Activated CD4-positive, alpha-beta memory T cell treated with anti-CD3 and anti-CD28 coated beads, Interleukin-2, amount 10 ng/mL, durations not matched to agents 7 days and 5 days (primary cell): ENCODE measurements at regions of chr19 and their contacts with region 1.

Region 1: GRCh38 chr19:13155472-13156359 is 5.5 kb downstream of the IER2 start:
- DNase-seq: peak; percentile 84
- H3K4me3 Mint-ChIP-seq: peak overlapping the region; percentile 95
- H3K27ac Mint-ChIP-seq: peak overlapping the region; percentile 99
- H3K4me1 Mint-ChIP-seq: peaks cover 47% of the 10 kb centered on the region
- H3K27me3 Mint-ChIP-seq: no peaks in the 10 kb centered on the region

Region 2: GRCh38 chr19:13099073-13099999 is 56.4 kb before region 1 on chr19:
- CTCF ChIA-PET with region 1: interaction called, 12 read pairs
- POLR2A ChIA-PET with region 1: interaction called, 21 read pairs
- DNase-seq: peak; percentile 86
- H3K4me3 Mint-ChIP-seq: peak overlapping the region; percentile 66
- H3K27ac Mint-ChIP-seq: peak overlapping the region; percentile 91
- H3K4me1 Mint-ChIP-seq: peaks cover 63% of the 10 kb centered on the region
- H3K27me3 Mint-ChIP-seq: peaks cover 31% of the 10 kb centered on the region

Region 3: DNA sequence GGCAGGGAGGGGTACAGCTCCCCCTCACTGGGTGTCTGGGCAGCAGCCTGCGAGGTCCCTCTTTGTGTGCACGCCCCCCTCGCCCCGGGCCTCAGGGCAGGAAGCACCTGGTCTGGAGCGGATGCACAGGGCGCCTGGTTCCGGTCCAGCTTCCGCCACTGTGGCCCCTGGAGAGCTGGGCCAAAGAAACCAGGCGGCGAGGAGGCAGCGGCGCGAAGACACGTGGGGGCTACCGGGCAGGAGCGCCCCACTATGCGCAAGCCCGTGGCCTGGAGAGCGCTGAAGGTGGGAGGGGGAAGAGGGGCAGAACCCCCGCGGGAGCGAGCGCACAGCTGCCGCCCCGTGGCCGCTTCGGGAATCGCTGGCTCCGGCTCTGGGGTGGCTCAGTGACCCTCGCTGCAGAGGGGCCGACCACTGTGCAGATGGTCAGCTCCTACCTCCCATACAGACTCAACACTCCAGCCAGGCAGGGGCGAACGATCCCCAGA is 51.3 kb before region 1 on chr19:
- CTCF ChIA-PET with region 1: interaction called, 12 read pairs
- POLR2A ChIA-PET with region 1: interaction called, 21 read pairs
- DNase-seq: peak; percentile 70
- H3K4me3 Mint-ChIP-seq: peak overlapping the region; percentile 90
- H3K27ac Mint-ChIP-seq: peak overlapping the region; percentile 89
- H3K4me1 Mint-ChIP-seq: peaks cover 45% of the 10 kb centered on the region
- H3K27me3 Mint-ChIP-seq: no peaks in the 10 kb centered on the region

Region 4: DNA sequence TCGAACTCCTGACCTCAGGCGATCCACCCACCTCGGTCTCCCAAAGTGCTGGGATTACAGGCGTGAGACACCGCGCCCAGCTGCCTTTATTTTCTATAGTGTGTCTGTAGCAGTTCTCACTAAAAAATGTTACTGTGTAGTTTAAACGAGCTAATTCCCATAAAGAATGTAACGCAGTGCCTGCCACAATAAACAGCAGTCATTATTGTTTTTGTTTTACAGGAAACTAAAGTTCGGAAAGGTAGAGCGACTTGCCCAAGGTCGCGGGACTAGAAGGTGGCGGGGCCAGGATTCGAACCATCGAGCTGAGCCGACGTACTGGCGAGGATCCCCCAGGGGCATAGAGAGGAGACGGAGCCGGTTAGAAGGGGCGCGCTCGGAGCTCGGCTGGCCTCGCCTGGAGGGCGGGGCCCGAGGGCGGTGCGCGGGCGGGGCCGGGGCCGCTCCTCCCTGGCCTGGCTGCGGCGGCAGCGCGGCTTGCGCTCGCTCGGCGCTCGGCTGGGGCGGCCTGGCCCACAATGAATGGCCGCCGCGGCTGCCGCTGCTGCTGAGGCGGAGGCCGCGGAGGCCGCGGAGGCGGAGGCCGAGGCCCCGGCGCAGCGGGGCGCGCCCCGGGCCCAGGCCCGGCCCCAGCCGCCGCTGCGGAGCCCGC is 37.8 kb before region 1 on chr19 and contains the start of gene NACC1:
- CTCF ChIA-PET with region 1: interaction called, 8 read pairs
- POLR2A ChIA-PET with region 1: interaction called, 79 read pairs
- DNase-seq: peak; percentile 93
- H3K4me3 Mint-ChIP-seq: peak within 1 kb of the TSS; percentile 96
- H3K27ac Mint-ChIP-seq: peak within 1 kb of the TSS; percentile 94
- H3K4me1 Mint-ChIP-seq: peaks cover 52% of the 10 kb centered on the region
- H3K27me3 Mint-ChIP-seq: no peaks in the 10 kb centered on the region
- total RNA-seq, gene NACC1: 74.5 to 82.2 TPM

Region 5: DNA sequence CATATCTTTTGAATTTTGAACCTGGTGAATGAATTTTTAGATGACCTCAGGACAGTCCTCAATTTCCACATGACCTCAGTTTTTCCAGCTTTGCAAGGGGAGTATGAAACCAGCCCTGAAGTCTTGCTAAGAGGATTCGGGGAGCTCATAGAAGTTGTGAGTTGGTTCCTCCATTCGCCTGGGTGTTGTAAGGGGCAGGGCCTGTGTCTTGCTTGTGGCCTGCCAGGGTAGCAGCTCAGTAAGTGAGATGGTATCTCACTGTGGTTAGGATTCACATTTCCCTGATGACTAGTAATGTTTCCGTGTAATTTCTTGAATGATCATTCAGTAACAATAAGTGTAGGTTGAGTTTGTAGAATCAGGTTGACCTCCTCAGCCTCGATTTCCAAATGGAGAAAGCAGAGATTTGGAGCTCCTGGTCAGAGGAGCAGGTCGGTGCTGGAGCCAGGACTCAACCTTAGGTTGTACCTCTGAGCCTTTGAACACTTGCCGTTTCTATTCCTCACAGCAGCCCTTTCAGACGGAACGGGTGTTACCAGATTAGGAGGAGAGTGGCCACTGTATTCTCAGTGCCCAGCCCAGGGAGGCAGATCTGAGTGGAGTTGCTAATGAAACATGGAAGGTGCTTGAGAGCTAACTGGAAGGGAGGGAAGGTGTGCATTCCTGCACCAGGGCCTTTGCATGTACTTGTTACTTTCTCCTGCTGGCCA is 23.1 kb before region 1 on chr19:
- CTCF ChIA-PET with region 1: interaction called, 13 read pairs
- POLR2A ChIA-PET with region 1: interaction called, 42 read pairs
- DNase-seq: peak; percentile 78
- H3K4me3 Mint-ChIP-seq: peak overlapping the region; percentile 61
- H3K27ac Mint-ChIP-seq: peak overlapping the region; percentile 91
- H3K4me1 Mint-ChIP-seq: peaks cover 45% of the 10 kb centered on the region
- H3K27me3 Mint-ChIP-seq: no peaks in the 10 kb centered on the region

Region 6: GRCh38 chr19:13172068-13172896 is 16.6 kb after region 1 on chr19:
- CTCF ChIA-PET with region 1: interaction called, 29 read pairs
- POLR2A ChIA-PET with region 1: interaction called, 335 read pairs
- DNase-seq: peak; percentile 71
- H3K4me3 Mint-ChIP-seq: peak overlapping the region; percentile 78
- H3K27ac Mint-ChIP-seq: peak overlapping the region; percentile 90
- H3K4me1 Mint-ChIP-seq: peaks cover 61% of the 10 kb centered on the region
- H3K27me3 Mint-ChIP-seq: no peaks in the 10 kb centered on the region

Region 7: DNA sequence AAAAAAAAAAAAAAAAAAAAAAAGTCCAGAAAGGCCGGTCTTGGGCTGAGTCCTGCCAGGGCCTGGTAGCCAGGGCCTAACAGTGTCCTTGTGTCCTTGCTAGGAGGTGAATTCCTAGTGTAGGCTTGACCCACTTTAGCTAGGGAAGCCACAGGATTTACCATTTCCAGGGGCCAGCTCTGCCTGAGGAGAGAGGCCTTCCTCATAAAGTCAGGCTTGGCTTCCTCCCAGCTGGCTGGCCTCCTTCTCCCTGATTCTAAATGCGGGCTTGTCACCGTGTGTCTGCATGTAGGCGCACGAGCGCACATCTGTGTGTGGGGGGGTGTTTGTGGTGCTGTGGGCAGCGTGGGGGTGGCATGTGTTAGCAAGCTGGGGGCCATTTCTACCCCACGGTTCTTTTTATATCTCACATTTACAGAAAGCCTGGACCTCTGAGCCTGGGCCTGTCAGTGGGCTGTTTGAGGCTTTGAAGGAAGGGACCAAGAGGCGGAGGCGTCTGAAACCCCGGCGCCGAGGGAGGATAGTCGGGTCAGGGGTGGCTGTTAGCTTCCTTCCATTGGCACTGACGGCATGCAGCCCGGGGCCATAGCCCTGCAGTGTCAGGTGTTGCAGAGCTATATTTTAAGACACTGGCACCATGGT is 26.2 kb after region 1 on chr19:
- CTCF ChIA-PET with region 1: interaction called, 3 read pairs
- POLR2A ChIA-PET with region 1: interaction called, 32 read pairs
- DNase-seq: peak; percentile 20
- H3K4me3 Mint-ChIP-seq: no peak overlapping the region
- H3K27ac Mint-ChIP-seq: peak overlapping the region; percentile 34
- H3K4me1 Mint-ChIP-seq: peaks cover 21% of the 10 kb centered on the region
- H3K27me3 Mint-ChIP-seq: no peaks in the 10 kb centered on the region

Region 8: GRCh38 chr19:13334801-13335481 is 179.2 kb after region 1 on chr19:
- CTCF ChIA-PET with region 1: no interaction called
- POLR2A ChIA-PET with region 1: no interaction called
- DNase-seq: no peak
- H3K4me3 Mint-ChIP-seq: no peak overlapping the region
- H3K27ac Mint-ChIP-seq: no peak overlapping the region
- H3K4me1 Mint-ChIP-seq: no peaks in the 10 kb centered on the region
- H3K27me3 Mint-ChIP-seq: no peaks in the 10 kb centered on the region